ENCODE measurements at regions of chr5 and their contacts with region 1.

Region 1: DNA sequence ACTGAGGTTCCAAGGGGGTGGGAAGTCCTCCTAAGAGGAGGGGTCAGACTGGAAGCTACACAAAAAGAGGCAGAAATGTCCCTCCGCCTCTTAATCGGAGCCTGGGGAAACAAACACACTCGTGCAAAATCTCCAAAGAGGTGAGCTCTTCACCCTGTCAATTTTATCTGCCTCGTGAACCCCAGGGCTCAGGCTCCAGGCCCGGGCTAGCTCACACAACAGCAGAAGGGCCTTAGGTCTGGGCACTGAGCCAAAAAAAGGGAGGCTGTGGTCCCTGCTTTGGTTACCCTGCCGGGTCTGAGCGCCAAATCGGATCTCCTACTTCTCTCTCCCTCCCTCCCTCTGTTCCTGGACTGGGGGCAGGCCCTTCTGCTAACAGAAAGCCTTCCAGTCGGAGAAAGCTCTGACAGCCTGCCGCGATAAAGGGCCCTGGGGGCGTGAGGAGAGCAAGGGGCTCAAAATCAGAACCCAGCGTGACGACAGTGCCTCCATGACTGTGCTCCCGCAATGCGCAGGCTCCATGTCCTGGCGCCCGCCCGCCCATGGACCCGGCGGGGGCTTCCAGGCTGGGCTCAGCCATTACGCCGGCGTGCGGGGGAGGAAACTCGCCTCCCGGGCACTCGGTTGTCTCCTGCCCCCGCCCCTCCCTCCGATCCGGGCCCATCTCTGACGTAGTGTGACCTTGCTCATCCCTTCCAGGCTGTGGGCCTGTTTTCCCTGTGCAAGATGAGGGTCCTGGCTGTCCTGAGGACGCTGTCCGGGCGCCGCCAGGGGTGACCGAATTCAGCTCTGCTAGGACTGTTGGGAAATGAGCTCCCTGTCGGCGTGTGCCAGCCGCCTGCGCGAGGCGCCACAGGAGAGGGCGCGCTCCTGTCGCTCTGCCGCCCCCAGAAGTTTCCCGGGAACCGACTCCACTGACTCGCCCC is 865 bp upstream of the SLC22A4 start:
- DNase-seq: peak; percentile 92
- H3K4me3 ChIP-seq: peak overlapping the region; percentile 64 to 87
- H3K27ac ChIP-seq: peak overlapping the region; percentile 95 to 99
- H3K4me1 ChIP-seq: peaks cover 9 to 25% of the 10 kb centered on the region in 2 experiments; a peak in 2 of 4 replicates
- H3K27me3 ChIP-seq: no peaks in the 10 kb centered on the region
- CTCF ChIP-seq: peak; percentile 23; the same call in 1 of the 2 replicates
- EP300 ChIP-seq: no peak
- RAD21 ChIP-seq: no peak; the same call in none of the 2 replicates

Region 2: DNA sequence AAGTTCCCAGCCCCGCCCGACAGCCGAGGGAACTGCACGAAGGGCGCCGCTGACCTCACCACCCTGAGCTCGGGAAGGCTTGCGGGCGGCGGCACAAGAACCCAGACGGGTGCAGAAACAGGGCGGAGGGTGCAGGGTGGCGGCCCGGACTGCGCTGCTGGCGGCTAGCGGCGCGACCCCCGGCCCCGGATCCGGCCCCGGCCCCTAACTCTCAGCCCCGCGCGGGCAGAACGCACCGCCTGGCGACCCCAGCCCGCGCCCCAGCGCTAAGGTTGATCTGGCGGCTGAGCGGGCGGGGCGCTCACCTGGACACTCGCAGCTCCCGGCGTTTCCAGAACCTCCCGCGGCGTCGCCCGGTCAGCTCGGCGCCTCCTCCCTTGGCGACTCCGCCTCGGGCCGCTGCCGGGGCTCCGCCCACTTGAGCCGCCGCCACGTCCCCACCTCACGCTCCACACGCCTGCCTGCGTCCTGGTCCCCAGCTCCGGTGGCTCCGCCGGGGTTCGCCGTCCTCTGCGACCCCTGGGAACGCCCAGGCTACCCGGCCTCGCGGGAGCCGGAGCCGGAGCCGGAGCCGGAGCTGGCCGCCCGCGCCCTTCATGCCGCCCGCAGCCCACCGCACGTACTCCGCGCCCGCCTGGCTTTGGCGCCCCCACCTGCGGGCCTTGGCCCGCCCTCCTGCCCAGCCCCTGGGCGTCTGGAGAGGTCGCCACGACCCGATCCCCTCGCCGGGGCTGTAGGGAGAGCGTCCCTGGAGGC is 65.7 kb before region 1 on chr5 and contains the start of gene P4HA2:
- CTCF ChIA-PET with region 1: interaction called, 5 read pairs
- POLR2A ChIA-PET with region 1: interaction called, 15 read pairs
- DNase-seq: peak; percentile 95
- H3K4me3 ChIP-seq: peak within 1 kb of the TSS; percentile 68 to 83
- H3K27ac ChIP-seq: peak within 1 kb of the TSS; percentile 45 to 67; a peak in 2 of 4 replicates
- H3K4me1 ChIP-seq: peaks cover 28 to 32% of the 10 kb centered on the region in 2 experiments; a peak in 3 of 4 replicates
- H3K27me3 ChIP-seq: no peaks in the 10 kb centered on the region
- CTCF ChIP-seq: no peak; the same call in 1 of the 2 replicates
- EP300 ChIP-seq: no peak
- RAD21 ChIP-seq: no peak
- polyA plus RNA-seq, gene P4HA2: 67.2 and 73.5 TPM in 2 replicates

Region 3: GRCh38 chr5:132260714-132261551 is 32.4 kb before region 1 on chr5:
- CTCF ChIA-PET with region 1: interaction called, 4 read pairs
- POLR2A ChIA-PET with region 1: interaction called, 19 read pairs
- DNase-seq: no peak
- H3K4me3 ChIP-seq: no peak overlapping the region
- H3K27ac ChIP-seq: peak overlapping the region; percentile 91 to 98
- H3K4me1 ChIP-seq: peaks cover 45 to 79% of the 10 kb centered on the region in 2 experiments
- H3K27me3 ChIP-seq: no peaks in the 10 kb centered on the region
- CTCF ChIP-seq: no peak
- EP300 ChIP-seq: peak in 1 of 2 experiments; percentile 66; a peak in 2 of 4 replicates
- RAD21 ChIP-seq: no peak

Region 4: GRCh38 chr5:132272311-132273210 is 20.8 kb before region 1 on chr5:
- CTCF ChIA-PET with region 1: interaction called, 15 read pairs
- POLR2A ChIA-PET with region 1: interaction called, 10 read pairs
- DNase-seq: peak; percentile 81
- H3K4me3 ChIP-seq: no peak overlapping the region
- H3K27ac ChIP-seq: no peak overlapping the region
- H3K4me1 ChIP-seq: peaks cover 18 to 32% of the 10 kb centered on the region in 2 experiments
- H3K27me3 ChIP-seq: no peaks in the 10 kb centered on the region
- CTCF ChIP-seq: peak; percentile 86
- EP300 ChIP-seq: no peak
- RAD21 ChIP-seq: peak; percentile 73

Region 5: DNA sequence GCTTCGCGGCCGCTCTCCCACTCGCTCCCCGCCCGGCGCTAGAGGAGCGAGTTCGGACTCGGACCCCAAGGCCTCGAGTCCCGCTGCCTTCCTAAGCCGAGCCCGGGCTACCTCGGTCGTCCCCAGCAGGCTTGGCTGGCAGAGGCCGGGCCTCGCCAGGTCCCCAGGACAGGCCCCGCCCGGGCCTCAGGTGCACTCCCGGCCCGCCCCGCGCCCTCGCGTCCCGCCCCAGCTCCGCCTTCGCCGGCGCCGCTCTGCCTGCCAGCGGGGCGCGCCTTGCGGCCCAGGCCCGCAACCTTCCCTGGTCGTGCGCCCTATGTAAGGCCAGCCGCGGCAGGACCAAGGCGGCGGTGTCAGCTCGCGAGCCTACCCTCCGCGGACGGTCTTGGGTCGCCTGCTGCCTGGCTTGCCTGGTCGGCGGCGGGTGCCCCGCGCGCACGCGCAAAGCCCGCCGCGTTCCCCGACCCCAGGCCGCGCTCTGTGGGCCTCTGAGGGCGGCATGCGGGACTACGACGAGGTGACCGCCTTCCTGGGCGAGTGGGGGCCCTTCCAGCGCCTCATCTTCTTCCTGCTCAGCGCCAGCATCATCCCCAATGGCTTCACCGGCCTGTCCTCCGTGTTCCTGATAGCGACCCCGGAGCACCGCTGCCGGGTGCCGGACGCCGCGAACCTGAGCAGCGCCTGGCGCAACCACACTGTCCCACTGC is 76.3 kb after region 1 on chr5 and contains the start of gene SLC22A5:
- CTCF ChIA-PET with region 1: interaction called, 3 read pairs
- POLR2A ChIA-PET with region 1: interaction called, 15 read pairs
- DNase-seq: peak; percentile 95
- H3K4me3 ChIP-seq: peak within 1 kb of the TSS; percentile 65 to 66
- H3K27ac ChIP-seq: peak within 1 kb of the TSS in 1 of 2 experiments; percentile 80; a peak in 2 of 4 replicates
- H3K4me1 ChIP-seq: peaks cover 9 to 13% of the 10 kb centered on the region in 2 experiments; a peak in 2 of 4 replicates
- H3K27me3 ChIP-seq: no peaks in the 10 kb centered on the region
- CTCF ChIP-seq: no peak
- EP300 ChIP-seq: no peak
- RAD21 ChIP-seq: no peak
- polyA plus RNA-seq, gene SLC22A5: 8.3 and 12.3 TPM in 2 replicates

Measured in SK-N-SH (cell line).